ENCODE measurements at regions of chrX and their contacts with region 1.

Region 1: GRCh38 chrX:20224814-20225487 is 41.8 kb downstream of the RPS6KA3 start:
- DNase-seq: no peak
- ATAC-seq: peak; percentile 82

Region 2: DNA sequence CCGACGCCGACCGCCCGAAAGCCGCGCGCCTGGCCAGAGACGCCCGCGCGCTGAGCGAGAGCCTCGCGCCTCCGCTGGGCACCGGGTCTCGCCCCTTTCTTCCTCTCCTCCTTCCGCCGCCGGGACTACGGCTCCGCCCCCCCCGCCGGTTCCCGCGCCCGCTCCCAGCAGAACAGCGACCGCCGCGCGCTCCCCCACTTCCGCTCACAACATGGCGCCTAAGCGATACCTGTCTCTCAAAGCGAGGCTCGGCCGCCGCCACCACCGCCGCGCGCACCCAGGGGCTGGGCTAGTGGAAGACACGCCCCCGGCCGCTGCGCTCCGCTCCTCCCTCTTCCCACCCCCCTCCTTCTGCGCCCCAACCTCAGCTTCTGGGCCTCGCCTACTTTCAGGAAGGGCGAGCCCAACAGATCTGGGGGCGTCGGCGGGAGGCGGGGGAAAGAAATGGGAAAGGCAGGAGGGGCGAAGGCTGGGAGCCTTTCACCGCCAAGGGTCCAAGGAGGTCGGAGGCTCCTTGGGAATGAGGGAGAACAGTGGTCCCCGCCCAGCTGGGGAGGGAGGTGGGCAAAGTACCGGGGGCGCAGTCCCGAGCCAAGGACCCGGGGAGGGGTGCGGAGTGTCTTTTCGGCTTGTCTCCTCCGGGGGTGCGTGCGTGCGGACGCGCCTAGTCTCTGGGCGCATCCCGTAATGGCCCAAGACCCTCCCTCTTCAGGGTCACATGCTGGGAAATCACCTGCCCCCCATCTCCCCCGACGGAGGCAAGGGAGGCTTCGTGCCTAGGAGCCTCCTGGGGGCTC is 42.1 kb after region 1 on chrX and contains the start of gene RPS6KA3:
- intact Hi-C with region 1: loop called (anchors 5 kb)
- DNase-seq: peak; percentile 95
- ATAC-seq: peak; percentile 94
- total RNA-seq, gene RPS6KA3: 33.5 TPM